ENCODE measurements at regions of chr2 and their contacts with region 1.

Region 1: GRCh38 chr2:168583064-168583709 is 127.1 kb downstream of the CERS6 start:
- DNase-seq: no peak
- ATAC-seq: peak; percentile 11
- H3K4me3 ChIP-seq: peak overlapping the region; percentile 36
- H3K27ac ChIP-seq: peak overlapping the region; percentile 88
- H3K4me1 ChIP-seq: peaks cover 35% of the 10 kb centered on the region
- H3K27me3 ChIP-seq: no peaks in the 10 kb centered on the region
- CTCF ChIP-seq: no peak

Region 2: GRCh38 chr2:168455648-168456520 is 127.3 kb before region 1 on chr2 and contains the start of gene CERS6:
- CTCF ChIA-PET with region 1: no interaction called
- POLR2A ChIA-PET with region 1: no interaction called
- intact Hi-C with region 1: loop called (anchors 5 kb)
- DNase-seq: peak; percentile 93
- ATAC-seq: peak; percentile 93
- H3K4me3 ChIP-seq: peak within 1 kb of the TSS; percentile 77
- H3K27ac ChIP-seq: peak within 1 kb of the TSS; percentile 12; the same call in 1 of the 2 replicates
- H3K4me1 ChIP-seq: peaks cover 18% of the 10 kb centered on the region
- H3K27me3 ChIP-seq: no peaks in the 10 kb centered on the region
- CTCF ChIP-seq: no peak
- total RNA-seq, gene CERS6: 24.2 and 25.9 TPM in 2 replicates

Region 3: DNA sequence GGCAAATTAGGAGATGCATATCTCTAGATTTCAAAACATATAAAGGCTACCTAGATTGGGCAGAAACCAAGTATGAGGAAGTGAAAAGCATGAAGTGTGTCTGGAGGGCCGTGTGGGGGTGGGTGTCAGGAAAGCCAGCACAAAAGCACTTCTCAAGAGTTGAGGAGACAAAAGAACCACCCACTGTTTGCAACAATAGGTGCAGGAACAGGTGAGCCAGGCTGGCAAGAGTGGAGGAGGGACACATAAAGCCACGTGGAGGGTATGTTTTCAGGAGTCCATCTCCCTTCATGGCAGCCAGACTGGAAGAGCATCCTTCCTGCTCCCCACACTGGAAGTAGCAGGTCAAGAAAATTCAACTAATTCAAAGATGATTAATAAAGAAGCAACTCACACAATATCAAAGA is 30.7 kb before region 1 on chr2:
- CTCF ChIA-PET with region 1: no interaction called
- POLR2A ChIA-PET with region 1: no interaction called
- intact Hi-C with region 1: no loop called
- DNase-seq: no peak
- ATAC-seq: no peak
- H3K4me3 ChIP-seq: no peak overlapping the region
- H3K27ac ChIP-seq: no peak overlapping the region
- H3K4me1 ChIP-seq: no peaks in the 10 kb centered on the region
- H3K27me3 ChIP-seq: no peaks in the 10 kb centered on the region
- CTCF ChIP-seq: no peak

Region 4: DNA sequence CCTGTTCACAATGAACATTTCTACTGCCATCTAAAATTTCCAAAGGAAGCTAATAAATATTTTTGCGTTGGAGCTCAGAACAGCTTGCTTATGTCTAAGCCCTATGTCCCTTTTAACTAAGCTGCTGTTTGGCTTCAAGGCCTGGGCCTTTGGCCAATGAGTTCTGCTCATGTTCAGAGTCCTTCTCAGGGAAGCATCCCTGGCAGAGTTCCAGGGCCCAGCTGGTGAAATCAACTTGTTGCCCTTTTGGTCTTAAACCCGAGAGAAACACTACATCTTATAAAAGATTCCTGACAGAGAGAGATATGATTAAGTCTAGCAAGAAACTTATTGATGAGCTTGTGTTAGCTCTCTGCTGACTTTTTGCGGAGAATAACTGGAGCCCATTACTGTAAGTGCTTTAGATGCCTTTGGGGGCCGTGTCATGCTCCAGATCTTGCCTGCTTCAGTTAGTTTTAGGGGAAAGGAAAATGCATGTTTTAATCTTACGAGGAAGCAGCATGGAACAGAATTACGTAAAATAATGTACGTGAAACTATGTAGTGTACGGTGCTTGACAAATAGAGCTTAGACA is 116.7 kb after region 1 on chr2:
- CTCF ChIA-PET with region 1: interaction called, 10 read pairs
- POLR2A ChIA-PET with region 1: no interaction called
- intact Hi-C with region 1: no loop called
- DNase-seq: no peak
- ATAC-seq: no peak
- H3K4me3 ChIP-seq: no peak overlapping the region
- H3K27ac ChIP-seq: no peak overlapping the region
- H3K4me1 ChIP-seq: no peaks in the 10 kb centered on the region
- H3K27me3 ChIP-seq: no peaks in the 10 kb centered on the region
- CTCF ChIP-seq: no peak

Region 5: DNA sequence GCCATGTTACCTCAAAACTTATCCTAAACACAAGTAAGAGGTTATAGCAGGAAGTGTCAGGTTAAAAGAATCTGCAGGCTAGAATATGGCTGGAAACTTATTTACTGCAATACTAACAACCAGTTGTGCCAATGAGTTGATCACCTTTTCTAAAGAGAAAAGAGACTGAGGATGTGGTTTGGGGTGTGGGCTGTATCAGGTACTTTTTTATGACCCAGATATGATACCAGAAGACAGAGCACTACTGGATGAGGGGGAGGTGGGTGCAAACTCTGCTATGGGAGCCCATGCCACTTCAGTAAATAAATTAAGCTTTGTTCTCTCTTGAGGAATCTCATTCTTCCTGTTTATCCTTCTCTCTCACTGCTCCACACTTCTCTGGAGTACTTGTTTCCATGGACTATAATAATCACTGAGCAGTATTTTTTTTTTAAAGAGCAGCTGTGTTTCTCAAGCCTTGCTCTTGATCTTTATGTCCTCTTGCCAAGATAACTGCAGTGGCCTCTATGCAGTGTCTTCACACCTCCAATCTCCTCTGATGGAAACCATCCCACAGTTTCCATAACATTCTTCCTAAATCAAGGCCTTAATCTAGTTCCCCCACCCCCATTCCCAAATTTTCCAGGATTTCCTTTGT is 168.0 kb after region 1 on chr2:
- CTCF ChIA-PET with region 1: no interaction called
- POLR2A ChIA-PET with region 1: no interaction called
- intact Hi-C with region 1: no loop called
- DNase-seq: no peak
- ATAC-seq: no peak
- H3K4me3 ChIP-seq: no peak overlapping the region
- H3K27ac ChIP-seq: no peak overlapping the region
- H3K4me1 ChIP-seq: no peaks in the 10 kb centered on the region
- H3K27me3 ChIP-seq: no peaks in the 10 kb centered on the region
- CTCF ChIP-seq: no peak